CD4-positive, alpha-beta T cell (primary cell): ENCODE measurements at regions of chr20 and their contacts with region 1.

Region 1: GRCh38 chr20:38748097-38748860 is at the start of gene ACTR5:
- DNase-seq: peak; percentile 94 to 99 (median 97)
- ATAC-seq: peak; percentile 89
- H3K4me3 ChIP-seq: peak within 1 kb of the TSS; percentile 73
- H3K4me3 Mint-ChIP-seq: peak within 1 kb of the TSS; percentile 96
- H3K27ac ChIP-seq: peak within 1 kb of the TSS; percentile 79 to 95
- H3K27ac Mint-ChIP-seq: peak within 1 kb of the TSS; percentile 95
- H3K4me1 ChIP-seq: peaks cover 16% of the 10 kb centered on the region
- H3K4me1 Mint-ChIP-seq: peaks cover 27% of the 10 kb centered on the region
- H3K27me3 ChIP-seq: no peaks in the 10 kb centered on the region
- H3K27me3 Mint-ChIP-seq: peaks cover 5% of the 10 kb centered on the region
- CTCF ChIP-seq: no peak
- total RNA-seq, gene ACTR5: 11.1 to 11.9 TPM

Region 2: GRCh38 chr20:38434743-38435554 is 313.3 kb before region 1 on chr20 and contains the start of gene SNHG17:
- CTCF ChIA-PET with region 1: no interaction called
- POLR2A ChIA-PET with region 1: no interaction called
- intact Hi-C with region 1: loop called in 1 of 2 experiments (anchors 10 kb)
- DNase-seq: peak; percentile 80 to 97 (median 86)
- ATAC-seq: peak; percentile 85
- H3K4me3 ChIP-seq: peak within 1 kb of the TSS; percentile 85
- H3K4me3 Mint-ChIP-seq: peak within 1 kb of the TSS; percentile 98
- H3K27ac ChIP-seq: peak within 1 kb of the TSS; percentile 78 to 88
- H3K27ac Mint-ChIP-seq: peak within 1 kb of the TSS; percentile 93
- H3K4me1 ChIP-seq: peaks cover 30% of the 10 kb centered on the region
- H3K4me1 Mint-ChIP-seq: peaks cover 52% of the 10 kb centered on the region
- H3K27me3 ChIP-seq: no peaks in the 10 kb centered on the region
- H3K27me3 Mint-ChIP-seq: peaks cover 10% of the 10 kb centered on the region
- CTCF ChIP-seq: peak; percentile 100
- total RNA-seq, gene SNHG17: 94.1 to 99.3 TPM

Region 3: GRCh38 chr20:38633577-38634093 is 114.6 kb before region 1 on chr20:
- CTCF ChIA-PET with region 1: interaction called, 5 read pairs
- POLR2A ChIA-PET with region 1: no interaction called
- intact Hi-C with region 1: loop called in 1 of 2 experiments (anchors 5 kb)
- DNase-seq: peak; percentile 22 to 75 (median 42)
- ATAC-seq: peak; percentile 91
- H3K4me3 ChIP-seq: no peak overlapping the region
- H3K4me3 Mint-ChIP-seq: no peak overlapping the region
- H3K27ac ChIP-seq: no peak overlapping the region
- H3K27ac Mint-ChIP-seq: no peak overlapping the region
- H3K4me1 ChIP-seq: peaks cover 7% of the 10 kb centered on the region
- H3K4me1 Mint-ChIP-seq: peaks cover 5% of the 10 kb centered on the region
- H3K27me3 ChIP-seq: peaks cover 4 to 8% of the 10 kb centered on the region in 2 experiments
- H3K27me3 Mint-ChIP-seq: peaks cover 23% of the 10 kb centered on the region
- CTCF ChIP-seq: peak; percentile 95

Region 4: GRCh38 chr20:38730989-38731737 is 17.1 kb before region 1 on chr20:
- CTCF ChIA-PET with region 1: interaction called, 6 read pairs
- POLR2A ChIA-PET with region 1: interaction called, 6 read pairs
- intact Hi-C with region 1: loop called (anchors 2 kb)
- DNase-seq: peak; percentile 64 to 89 (median 72)
- ATAC-seq: peak; percentile 80
- H3K4me3 ChIP-seq: peak overlapping the region; percentile 56
- H3K4me3 Mint-ChIP-seq: peak overlapping the region; percentile 82
- H3K27ac ChIP-seq: no peak overlapping the region
- H3K27ac Mint-ChIP-seq: peak overlapping the region; percentile 57
- H3K4me1 ChIP-seq: peaks cover 59% of the 10 kb centered on the region
- H3K4me1 Mint-ChIP-seq: peaks cover 53% of the 10 kb centered on the region
- H3K27me3 ChIP-seq: peaks cover 90 to 91% of the 10 kb centered on the region in 2 experiments
- H3K27me3 Mint-ChIP-seq: peaks cover 100% of the 10 kb centered on the region
- CTCF ChIP-seq: peak; percentile 99

Region 5: DNA sequence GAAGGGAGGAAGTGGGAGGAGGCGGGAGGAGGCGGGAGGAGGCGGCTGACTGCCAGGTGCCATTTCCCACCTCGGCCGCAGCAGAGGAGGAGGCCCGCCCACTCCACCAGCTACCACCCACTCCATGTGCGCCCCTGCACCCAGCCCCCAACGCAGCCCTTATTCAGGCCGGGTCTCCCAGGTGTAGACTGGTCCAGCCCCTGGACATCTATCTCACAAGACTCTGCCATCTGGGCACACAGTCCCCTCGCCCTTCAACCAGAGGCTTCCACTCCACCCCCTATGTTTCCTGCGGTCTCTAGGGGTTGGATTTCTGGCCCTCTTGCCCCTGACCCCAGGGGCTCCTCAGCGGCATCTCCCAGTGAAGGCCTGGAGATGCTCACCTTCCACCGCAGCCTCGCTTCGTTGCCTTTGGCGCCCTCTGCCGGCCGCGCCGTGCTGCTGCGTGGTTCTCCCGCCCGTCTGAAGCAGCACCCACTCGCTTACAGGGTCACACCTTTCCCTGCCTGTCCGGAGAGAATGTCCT is 145.3 kb after region 1 on chr20:
- CTCF ChIA-PET with region 1: no interaction called
- POLR2A ChIA-PET with region 1: no interaction called
- intact Hi-C with region 1: loop called (anchors 1 to 10 kb)
- DNase-seq: peak; percentile 61 to 90 (median 78)
- ATAC-seq: peak; percentile 88
- H3K4me3 ChIP-seq: peak overlapping the region; percentile 10
- H3K4me3 Mint-ChIP-seq: peak overlapping the region; percentile 5
- H3K27ac ChIP-seq: peak overlapping the region; percentile 15 to 59
- H3K27ac Mint-ChIP-seq: peak overlapping the region; percentile 77
- H3K4me1 ChIP-seq: peaks cover 24% of the 10 kb centered on the region
- H3K4me1 Mint-ChIP-seq: peaks cover 33% of the 10 kb centered on the region
- H3K27me3 ChIP-seq: no peaks in the 10 kb centered on the region
- H3K27me3 Mint-ChIP-seq: no peaks in the 10 kb centered on the region
- CTCF ChIP-seq: peak; percentile 96

Region 6: GRCh38 chr20:38962044-38962927 is 214.0 kb after region 1 on chr20 and contains the start of gene DHX35:
- CTCF ChIA-PET with region 1: interaction called, 4 read pairs
- POLR2A ChIA-PET with region 1: interaction called, 8 read pairs
- intact Hi-C with region 1: loop called (anchors 2 to 5 kb)
- DNase-seq: peak; percentile 96 to 100 (median 98)
- ATAC-seq: peak; percentile 98
- H3K4me3 ChIP-seq: peak within 1 kb of the TSS; percentile 80
- H3K4me3 Mint-ChIP-seq: peak within 1 kb of the TSS; percentile 97
- H3K27ac ChIP-seq: peak within 1 kb of the TSS; percentile 73 to 77
- H3K27ac Mint-ChIP-seq: peak within 1 kb of the TSS; percentile 88
- H3K4me1 ChIP-seq: peaks cover 16% of the 10 kb centered on the region
- H3K4me1 Mint-ChIP-seq: peaks cover 33% of the 10 kb centered on the region
- H3K27me3 ChIP-seq: no peaks in the 10 kb centered on the region
- H3K27me3 Mint-ChIP-seq: no peaks in the 10 kb centered on the region
- CTCF ChIP-seq: peak; percentile 23
- total RNA-seq, gene DHX35: 7.3 to 7.6 TPM